IMR-90 (cell line): ENCODE measurements at regions of chr13 and their contacts with region 1.

Region 1: GRCh38 chr13:49784886-49785570 is 7.5 kb downstream of the KPNA3 start:
- DNase-seq: peak; percentile 26
- ATAC-seq: no peak
- H3K4me3 ChIP-seq: no peak overlapping the region
- H3K27ac ChIP-seq: no peak overlapping the region
- H3K4me1 ChIP-seq: peaks cover 15% of the 10 kb centered on the region
- H3K27me3 ChIP-seq: no peaks in the 10 kb centered on the region
- CTCF ChIP-seq: no peak
- POLR2A ChIP-seq: no peak
- RAD21 ChIP-seq: no peak

Region 2: GRCh38 chr13:49711218-49711863 is 73.7 kb before region 1 on chr13:
- CTCF ChIA-PET with region 1: no interaction called
- POLR2A ChIA-PET with region 1: no interaction called
- dilution Hi-C with region 1: no loop called
- in situ Hi-C with region 1: no loop called
- intact Hi-C with region 1: loop called (anchors 5 kb)
- DNase-seq: peak; percentile 96
- ATAC-seq: peak; percentile 100
- H3K4me3 ChIP-seq: no peak overlapping the region
- H3K27ac ChIP-seq: no peak overlapping the region
- H3K4me1 ChIP-seq: peaks cover 3% of the 10 kb centered on the region
- H3K27me3 ChIP-seq: no peaks in the 10 kb centered on the region
- CTCF ChIP-seq: no peak
- POLR2A ChIP-seq: no peak
- RAD21 ChIP-seq: no peak

Region 3: DNA sequence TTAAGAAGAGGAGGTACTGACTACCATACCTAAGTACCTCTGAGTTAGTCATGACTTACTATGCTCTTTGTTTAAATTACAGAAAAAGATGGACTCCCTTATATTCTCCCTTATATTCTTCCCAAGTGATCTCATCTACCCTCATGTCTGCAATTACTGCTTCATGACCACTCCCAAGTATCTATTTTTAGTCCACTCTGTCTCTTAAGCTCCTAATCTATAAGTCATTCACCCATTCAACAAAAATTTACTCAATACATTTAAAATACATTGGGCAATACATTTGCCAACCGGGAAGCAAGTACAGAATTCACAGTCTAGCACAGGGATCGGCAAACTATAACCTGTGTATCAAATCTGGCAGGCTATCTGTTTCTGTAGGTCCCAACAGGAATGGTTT is 35.2 kb before region 1 on chr13:
- CTCF ChIA-PET with region 1: no interaction called
- POLR2A ChIA-PET with region 1: no interaction called
- dilution Hi-C with region 1: no loop called
- in situ Hi-C with region 1: no loop called
- intact Hi-C with region 1: loop called (anchors 5 kb)
- DNase-seq: peak; percentile 63
- ATAC-seq: peak; percentile 37; the same call in 1 of the 2 replicates
- H3K4me3 ChIP-seq: no peak overlapping the region
- H3K27ac ChIP-seq: no peak overlapping the region
- H3K4me1 ChIP-seq: no peaks in the 10 kb centered on the region; the same call in 1 of the 2 replicates
- H3K27me3 ChIP-seq: no peaks in the 10 kb centered on the region
- CTCF ChIP-seq: no peak
- POLR2A ChIP-seq: no peak
- RAD21 ChIP-seq: no peak